ENCODE measurements at regions of chr15 and their contacts with region 1.

Region 1: DNA sequence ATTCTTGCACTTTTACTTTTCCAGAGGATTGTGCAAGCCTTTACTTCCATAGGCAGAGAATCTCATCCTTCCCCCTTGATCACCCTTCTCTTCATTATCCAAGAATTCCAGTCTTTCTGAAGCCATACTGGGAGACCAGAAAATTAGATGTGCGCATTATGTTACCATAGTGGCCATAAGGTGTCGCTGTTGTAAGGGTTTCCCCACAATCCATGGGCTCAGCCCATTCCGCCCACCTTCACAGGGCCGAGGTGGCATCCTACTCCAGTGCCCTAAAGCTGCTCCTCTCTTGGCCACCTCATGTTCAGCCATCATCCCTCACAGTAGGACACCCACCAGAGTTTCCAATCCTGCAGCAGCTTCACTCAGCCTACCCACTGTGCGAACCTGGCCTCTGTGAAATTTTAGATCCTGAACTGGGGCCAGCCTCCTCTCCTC is 35.0 kb downstream of the CTSH start:
- DNase-seq: peak; percentile 77
- H3K4me3 Mint-ChIP-seq: no peak overlapping the region
- H3K27ac Mint-ChIP-seq: peak overlapping the region; percentile 22
- H3K4me1 Mint-ChIP-seq: peaks cover 17% of the 10 kb centered on the region
- H3K27me3 Mint-ChIP-seq: no peaks in the 10 kb centered on the region

Region 2: GRCh38 chr15:78977091-78977571 is 67.3 kb after region 1 on chr15:
- intact Hi-C with region 1: loop called (anchors 2 kb)
- DNase-seq: no peak
- H3K4me3 Mint-ChIP-seq: no peak overlapping the region
- H3K27ac Mint-ChIP-seq: peak overlapping the region; percentile 73
- H3K4me1 Mint-ChIP-seq: peaks cover 13% of the 10 kb centered on the region
- H3K27me3 Mint-ChIP-seq: peaks cover 2% of the 10 kb centered on the region

Measured in activated CD4-positive, alpha-beta T cell treated with anti-CD3 and anti-CD28 coated beads, Interleukin-2, amount 10 ng/mL, durations not matched to agents 24 days and 14 days (primary cell).